ENCODE measurements at regions of chr19 and their contacts with region 1.

Region 1: GRCh38 chr19:293436-294110 is 2.4 kb upstream of the PLPP2 start:
- DNase-seq: no peak
- H3K4me3 Mint-ChIP-seq: no peak overlapping the region
- H3K27ac Mint-ChIP-seq: no peak overlapping the region
- H3K4me1 Mint-ChIP-seq: peaks cover 21% of the 10 kb centered on the region
- H3K27me3 Mint-ChIP-seq: no peaks in the 10 kb centered on the region
- CTCF ChIP-seq: no peak

Region 2: GRCh38 chr19:277581-278165 is 15.9 kb before region 1 on chr19:
- CTCF ChIA-PET with region 1: interaction called, 10 read pairs
- intact Hi-C with region 1: no loop called
- DNase-seq: no peak
- H3K4me3 Mint-ChIP-seq: no peak overlapping the region
- H3K27ac Mint-ChIP-seq: no peak overlapping the region
- H3K4me1 Mint-ChIP-seq: no peaks in the 10 kb centered on the region
- H3K27me3 Mint-ChIP-seq: no peaks in the 10 kb centered on the region
- CTCF ChIP-seq: no peak

Region 3: GRCh38 chr19:372306-372890 is 78.8 kb after region 1 on chr19:
- CTCF ChIA-PET with region 1: no interaction called
- intact Hi-C with region 1: no loop called
- DNase-seq: no peak
- H3K4me3 Mint-ChIP-seq: no peak overlapping the region
- H3K27ac Mint-ChIP-seq: no peak overlapping the region
- H3K4me1 Mint-ChIP-seq: no peaks in the 10 kb centered on the region
- H3K27me3 Mint-ChIP-seq: peaks cover 74% of the 10 kb centered on the region
- CTCF ChIP-seq: no peak

Region 4: GRCh38 chr19:401866-402603 is 108.5 kb after region 1 on chr19:
- CTCF ChIA-PET with region 1: no interaction called
- intact Hi-C with region 1: no loop called
- DNase-seq: no peak
- H3K4me3 Mint-ChIP-seq: no peak overlapping the region
- H3K27ac Mint-ChIP-seq: no peak overlapping the region
- H3K4me1 Mint-ChIP-seq: no peaks in the 10 kb centered on the region
- H3K27me3 Mint-ChIP-seq: peaks cover 15% of the 10 kb centered on the region
- CTCF ChIP-seq: no peak

Measured in Calu3 (cell line).